HCT116 (cell line): ENCODE measurements at regions of chr17 and their contacts with region 1.

Region 1: GRCh38 chr17:21457051-21458026 is 81.2 kb downstream of the KCNJ12 start:
- DNase-seq: peak; percentile 69
- ATAC-seq: peak; percentile 95
- H3K4me3 ChIP-seq: no peak overlapping the region
- H3K27ac ChIP-seq: no peak overlapping the region
- H3K4me1 ChIP-seq: peaks cover 4 to 13% of the 10 kb centered on the region in 2 experiments; a peak in 3 of 4 replicates
- H3K27me3 ChIP-seq: 0 out of 2 replicates have a peak, but pooled peaks cover 5% of the 10 kb centered on the region
- CTCF ChIP-seq: peak; percentile 81 to 94 (median 89)
- POLR2A ChIP-seq: no peak
- RAD21 ChIP-seq: peak; percentile 74

Region 2: GRCh38 chr17:21126645-21127510 is 330.5 kb before region 1 on chr17 and contains the start of gene DHRS7B:
- CTCF ChIA-PET with region 1: no interaction called
- POLR2A ChIA-PET with region 1: no interaction called
- RAD21 ChIA-PET with region 1: no interaction called
- intact Hi-C with region 1: loop called (anchors 5 kb)
- DNase-seq: peak; percentile 95
- ATAC-seq: peak; percentile 94
- H3K4me3 ChIP-seq: peak within 1 kb of the TSS; percentile 76 to 94
- H3K27ac ChIP-seq: peak within 1 kb of the TSS; percentile 64
- H3K4me1 ChIP-seq: peaks cover 8 to 16% of the 10 kb centered on the region in 2 experiments
- H3K27me3 ChIP-seq: no peaks in the 10 kb centered on the region
- CTCF ChIP-seq: no peak
- POLR2A ChIP-seq: peak; percentile 81
- RAD21 ChIP-seq: no peak
- total RNA-seq, gene DHRS7B: 19.6 TPM

Region 3: DNA sequence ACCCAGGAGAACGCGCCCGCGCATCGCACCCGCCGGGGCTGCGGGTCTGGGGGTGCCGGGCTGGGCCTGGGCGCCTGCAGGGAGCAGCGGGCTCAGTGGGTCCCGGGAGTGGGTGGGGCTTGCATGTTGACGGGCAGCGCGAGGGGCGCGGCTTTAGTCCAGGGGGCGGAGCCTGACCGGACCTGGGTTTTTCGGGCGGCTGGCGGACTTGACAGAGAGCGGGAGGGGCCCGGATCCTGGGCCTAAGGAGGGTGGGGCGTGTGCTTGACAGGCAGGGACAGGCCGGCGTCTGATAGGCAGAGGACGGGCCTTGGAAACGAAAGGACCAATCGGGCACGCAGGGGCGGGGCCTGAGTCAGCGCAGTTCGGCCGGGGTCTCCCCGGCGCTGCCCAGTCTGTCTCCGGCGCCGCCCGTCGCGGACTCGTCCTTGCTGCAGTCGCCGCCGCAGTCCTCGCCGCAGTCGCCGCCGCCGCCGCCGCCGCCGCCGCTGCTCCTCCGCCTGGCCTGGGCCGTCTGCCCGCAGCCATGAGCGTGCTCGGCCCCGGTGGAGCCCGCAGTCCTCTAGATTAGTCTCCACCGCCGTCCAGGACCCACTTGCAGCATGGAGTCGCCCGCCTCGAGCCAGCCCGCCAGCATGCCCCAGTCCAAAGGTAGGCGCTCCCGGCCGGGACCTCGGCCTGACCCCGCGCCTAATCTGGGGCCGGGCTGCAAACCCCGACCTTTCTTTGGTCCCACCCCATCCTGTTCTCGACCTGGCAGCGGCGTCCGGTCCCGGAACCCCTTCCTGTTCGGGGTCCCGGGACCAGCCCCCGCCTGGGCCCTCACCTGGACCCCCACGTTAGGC is 172.8 kb before region 1 on chr17 and contains the start of gene MAP2K3:
- CTCF ChIA-PET with region 1: interaction called, 5 read pairs
- POLR2A ChIA-PET with region 1: no interaction called
- RAD21 ChIA-PET with region 1: no interaction called
- intact Hi-C with region 1: loop called (anchors 10 kb)
- DNase-seq: peak; percentile 98
- ATAC-seq: peak; percentile 75
- H3K4me3 ChIP-seq: peak within 1 kb of the TSS; percentile 91 to 99
- H3K27ac ChIP-seq: peak within 1 kb of the TSS; percentile 99
- H3K4me1 ChIP-seq: peaks cover 57 to 84% of the 10 kb centered on the region in 2 experiments
- H3K27me3 ChIP-seq: no peaks in the 10 kb centered on the region
- CTCF ChIP-seq: no peak
- POLR2A ChIP-seq: peak; percentile 82
- RAD21 ChIP-seq: no peak
- total RNA-seq, gene MAP2K3: 96.7 TPM